Common myeloid progenitor, CD34-positive (primary cell): ENCODE measurements at regions of chr12 and their contacts with region 1.

Region 1: DNA sequence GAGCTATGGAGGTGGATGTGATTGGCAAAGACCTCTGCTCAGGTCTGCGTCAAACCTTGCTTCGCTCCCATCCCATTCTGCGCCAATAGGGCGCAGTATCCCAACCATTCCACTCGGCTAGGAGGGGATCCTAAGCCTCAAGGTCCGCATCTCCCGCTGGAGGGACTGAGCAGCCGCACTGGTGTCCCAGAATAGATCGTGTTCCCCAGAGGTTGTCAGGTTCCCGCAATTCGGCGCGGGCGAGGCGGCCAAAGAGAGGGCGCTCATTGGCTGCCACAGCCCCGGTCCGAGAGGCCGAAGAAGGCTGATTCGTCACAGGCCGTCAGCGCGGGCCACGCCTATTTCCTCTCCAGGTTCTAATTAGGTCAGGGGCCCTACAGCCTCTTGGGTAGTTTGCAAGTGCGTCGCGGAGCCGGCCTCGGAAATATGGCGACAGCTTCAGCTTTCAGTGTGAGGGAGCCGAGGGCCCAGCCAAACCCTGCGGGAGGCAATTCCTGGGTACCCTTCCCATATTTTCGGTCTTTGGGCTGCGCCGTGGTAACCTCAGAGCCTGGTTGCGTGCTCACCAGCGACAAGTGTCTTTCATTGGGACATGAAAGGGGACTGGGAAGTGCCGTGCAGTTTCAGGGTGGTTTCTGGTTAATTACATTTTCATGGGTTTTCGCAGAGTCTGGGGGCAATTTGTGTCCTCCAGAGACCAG is 5.0 kb downstream of the OR10AD1 start:
- DNase-seq: peak; percentile 93 to 94 (median 94)
- H3K4me3 ChIP-seq: peak overlapping the region; percentile 77 to 99 (median 87)
- H3K27ac ChIP-seq: peak overlapping the region; percentile 93 to 98
- H3K4me1 ChIP-seq: peaks cover 9 to 35% (median 34%) of the 10 kb centered on the region in 4 experiments
- H3K27me3 ChIP-seq: no peaks in the 10 kb centered on the region

Region 2: DNA sequence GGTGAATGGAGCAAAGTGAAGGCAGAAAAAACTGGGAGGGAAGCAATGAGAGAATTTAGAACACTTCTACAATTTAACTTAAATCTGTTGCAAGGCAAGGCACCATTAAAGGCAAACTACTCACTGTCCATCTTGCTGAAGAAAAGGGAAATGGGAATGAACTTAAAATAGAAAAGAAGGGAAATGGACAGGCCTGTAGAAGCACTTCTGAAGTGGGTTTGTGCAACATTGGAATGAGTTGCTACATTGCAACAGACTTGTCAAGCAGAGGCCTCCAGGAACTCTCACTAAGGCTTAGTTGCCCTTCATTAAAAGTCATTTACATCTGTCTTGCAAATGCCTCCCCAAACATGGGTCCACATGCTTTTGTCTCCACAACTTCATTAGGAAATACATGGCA is 18.7 kb after region 1 on chr12:
- CTCF ChIA-PET with region 1: interaction called, 15 read pairs
- POLR2A ChIA-PET with region 1: interaction called, 5 read pairs
- DNase-seq: no peak
- H3K4me3 ChIP-seq: no peak overlapping the region
- H3K27ac ChIP-seq: no peak overlapping the region
- H3K4me1 ChIP-seq: peaks cover 0 to 10% (median 9%) of the 10 kb centered on the region in 4 experiments
- H3K27me3 ChIP-seq: no peaks in the 10 kb centered on the region

Region 3: GRCh38 chr12:48279101-48279500 is 81.0 kb after region 1 on chr12:
- CTCF ChIA-PET with region 1: no interaction called
- POLR2A ChIA-PET with region 1: no interaction called
- DNase-seq: peak in 2 of 3 donors; percentile 20 to 26
- H3K4me3 ChIP-seq: no peak overlapping the region
- H3K27ac ChIP-seq: no peak overlapping the region
- H3K4me1 ChIP-seq: peaks cover 0 to 3% (median 0%) of the 10 kb centered on the region in 4 experiments
- H3K27me3 ChIP-seq: no peaks in the 10 kb centered on the region